ENCODE measurements at regions of chr11 and their contacts with region 1.

Region 1: DNA sequence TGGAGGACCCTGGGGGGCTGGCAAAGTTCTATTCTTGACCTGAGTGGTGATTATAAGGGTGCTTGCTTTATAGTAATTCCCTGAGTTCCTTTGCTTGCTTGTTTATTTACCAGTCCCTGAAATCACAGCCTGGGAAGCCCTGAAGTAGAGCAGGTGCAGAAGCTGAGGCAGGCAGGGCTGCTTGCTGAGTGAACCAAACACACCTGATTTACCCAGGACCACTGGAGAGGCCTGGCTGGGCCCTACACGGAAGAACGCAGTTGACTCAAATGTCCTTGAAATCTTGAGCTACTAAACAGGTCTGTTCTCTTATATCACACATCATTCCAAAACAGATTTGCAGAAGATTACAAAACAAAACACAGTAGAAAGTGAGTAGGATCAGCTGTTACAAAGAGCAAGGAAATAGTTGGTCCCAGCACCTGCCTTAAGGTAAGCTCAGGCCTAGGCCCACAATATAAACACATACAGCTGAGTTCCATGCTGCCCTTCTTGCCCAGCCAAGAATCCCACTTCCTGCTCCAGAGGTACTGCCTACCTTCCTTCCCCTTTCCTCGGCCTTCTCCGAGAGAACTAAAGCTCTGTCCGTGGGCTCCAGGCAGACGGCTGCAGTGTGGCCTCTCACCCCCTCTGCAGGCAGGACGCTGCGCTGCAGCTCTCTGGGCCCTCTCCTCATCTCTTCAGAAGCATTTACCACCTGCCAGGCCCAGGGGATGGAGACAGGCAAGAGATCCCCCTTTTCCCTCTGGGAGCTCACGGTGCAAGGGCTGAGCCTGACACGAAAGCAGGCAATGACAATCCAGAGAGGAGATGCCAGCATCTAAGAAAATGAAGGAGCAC is 46.1 kb upstream of the SCUBE2 start:
- DNase-seq: peak; percentile 78
- CTCF ChIP-seq: peak; percentile 96

Region 2: GRCh38 chr11:8911029-8911826 is 226.3 kb before region 1 on chr11 and contains the start of gene AKIP1:
- CTCF ChIA-PET with region 1: interaction called, 12 read pairs
- POLR2A ChIA-PET with region 1: no interaction called
- DNase-seq: peak; percentile 91
- CTCF ChIP-seq: no peak

Region 3: GRCh38 chr11:9015677-9016076 is 121.8 kb before region 1 on chr11:
- CTCF ChIA-PET with region 1: interaction called, 224 read pairs
- POLR2A ChIA-PET with region 1: no interaction called
- DNase-seq: peak; percentile 80
- CTCF ChIP-seq: peak; percentile 79

Region 4: DNA sequence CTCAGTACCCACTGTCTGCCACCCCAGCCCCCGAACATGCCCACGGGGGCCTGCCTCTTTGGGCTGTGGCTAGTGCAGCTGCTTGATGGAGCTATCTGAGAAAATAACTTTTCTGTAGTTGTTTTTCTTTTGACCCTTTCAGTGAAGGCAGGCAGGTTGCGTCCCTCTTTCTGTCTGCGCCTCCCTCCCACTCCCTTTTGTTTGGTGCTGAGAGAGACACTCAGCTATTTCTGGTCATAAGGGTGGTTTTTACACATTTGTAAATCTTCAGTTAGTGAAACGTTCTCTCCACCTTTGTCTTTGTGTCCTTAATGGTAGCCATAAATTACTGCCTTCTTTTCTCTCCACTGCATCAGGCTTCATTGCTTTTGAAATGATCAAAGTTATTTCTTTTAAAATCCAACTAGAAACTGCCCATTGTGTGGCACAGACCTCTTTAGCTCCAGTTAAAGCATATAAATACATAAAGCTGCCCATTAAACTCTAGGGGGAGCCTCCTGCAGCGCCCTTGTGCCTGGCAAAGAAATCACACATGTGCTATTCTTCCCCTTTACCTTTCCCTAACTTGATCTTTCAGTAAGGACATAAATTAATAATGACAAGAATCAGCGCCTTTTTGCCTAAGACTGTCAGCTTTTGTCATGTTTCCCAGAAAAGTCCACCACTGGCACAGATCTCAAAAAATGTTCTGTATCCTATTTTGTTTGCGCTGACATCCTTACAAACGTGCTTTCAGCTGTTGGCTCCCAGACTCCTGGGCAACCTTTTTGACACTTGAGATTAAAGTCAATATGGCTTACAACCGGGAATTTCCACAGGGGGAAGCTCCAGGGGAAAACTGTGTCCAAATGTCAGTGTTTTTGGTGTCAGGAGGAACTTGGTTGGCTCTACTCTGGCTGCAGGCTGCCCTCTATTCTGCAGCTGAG is 44.4 kb before region 1 on chr11:
- CTCF ChIA-PET with region 1: interaction called, 12 read pairs
- POLR2A ChIA-PET with region 1: no interaction called
- DNase-seq: no peak
- CTCF ChIP-seq: peak; percentile 8

Region 5: DNA sequence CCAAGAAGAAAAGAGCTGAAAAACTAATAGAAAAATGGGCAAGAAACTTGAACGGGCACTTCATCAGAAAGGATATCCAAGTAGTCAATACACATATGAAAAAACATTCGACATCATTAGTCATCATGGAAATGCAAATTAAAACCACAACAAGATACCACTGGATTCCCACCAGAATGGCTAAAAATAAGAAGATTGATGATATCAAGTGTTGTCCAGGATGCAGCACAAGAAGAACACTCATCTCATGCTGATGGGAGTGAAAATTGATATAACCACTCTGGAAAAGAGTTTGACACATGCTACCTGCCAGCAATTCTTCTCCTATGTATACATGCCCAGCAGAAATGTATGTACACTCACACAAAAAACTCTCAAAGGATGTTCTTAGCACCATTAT is 19.2 kb before region 1 on chr11:
- CTCF ChIA-PET with region 1: interaction called, 24 read pairs
- POLR2A ChIA-PET with region 1: no interaction called
- DNase-seq: no peak
- CTCF ChIP-seq: no peak

Region 6: GRCh38 chr11:9155930-9156329 is 18.4 kb after region 1 on chr11:
- CTCF ChIA-PET with region 1: interaction called, 88 read pairs
- POLR2A ChIA-PET with region 1: no interaction called
- DNase-seq: no peak
- CTCF ChIP-seq: no peak

Region 7: GRCh38 chr11:9206496-9206895 is 69.0 kb after region 1 on chr11:
- CTCF ChIA-PET with region 1: no interaction called
- POLR2A ChIA-PET with region 1: no interaction called
- DNase-seq: no peak
- CTCF ChIP-seq: no peak

Region 8: DNA sequence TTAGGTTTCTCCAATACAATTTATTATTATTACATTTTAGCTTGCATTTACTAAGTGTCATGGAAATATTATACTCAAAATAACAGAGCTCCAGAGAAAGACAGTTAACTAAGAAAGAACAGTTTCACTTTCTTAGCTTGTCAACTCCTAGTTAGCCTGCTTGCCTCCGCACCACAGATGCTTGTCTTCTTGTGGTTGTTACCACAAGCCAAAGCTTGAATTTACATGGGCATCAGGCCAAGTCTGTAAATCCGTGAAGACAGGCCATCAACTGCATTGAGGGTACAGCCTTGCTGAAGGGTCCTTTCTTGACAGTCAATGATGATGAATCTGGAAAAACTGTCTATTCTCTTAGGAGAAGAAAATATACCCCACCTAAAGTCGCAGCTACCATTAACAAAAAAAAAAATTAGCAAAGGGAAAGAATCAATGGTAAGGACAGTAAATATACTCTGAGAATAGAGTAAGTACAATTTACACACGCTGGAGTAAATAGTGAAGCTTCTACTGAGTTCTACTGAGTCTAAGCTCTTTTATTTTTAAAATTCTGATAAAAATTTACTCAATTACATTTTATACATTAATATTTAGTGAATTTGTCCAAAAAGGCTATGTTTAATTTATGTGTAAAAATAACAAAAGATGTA is 143.3 kb after region 1 on chr11:
- CTCF ChIA-PET with region 1: no interaction called
- POLR2A ChIA-PET with region 1: no interaction called
- DNase-seq: peak; percentile 47
- CTCF ChIP-seq: no peak

Region 9: GRCh38 chr11:9314291-9315036 is 177.0 kb after region 1 on chr11 and contains the start of gene TMEM41B:
- CTCF ChIA-PET with region 1: no interaction called
- POLR2A ChIA-PET with region 1: no interaction called
- DNase-seq: peak; percentile 100
- CTCF ChIP-seq: no peak

Region 10: GRCh38 chr11:9489080-9489765 is 351.7 kb after region 1 on chr11:
- CTCF ChIA-PET with region 1: no interaction called
- POLR2A ChIA-PET with region 1: no interaction called
- DNase-seq: no peak
- CTCF ChIP-seq: no peak

Measured in GM10248 (cell line).